Naive thymus-derived CD4-positive, alpha-beta T cell (primary cell): ENCODE measurements at regions of chrX and their contacts with region 1.

Region 1: DNA sequence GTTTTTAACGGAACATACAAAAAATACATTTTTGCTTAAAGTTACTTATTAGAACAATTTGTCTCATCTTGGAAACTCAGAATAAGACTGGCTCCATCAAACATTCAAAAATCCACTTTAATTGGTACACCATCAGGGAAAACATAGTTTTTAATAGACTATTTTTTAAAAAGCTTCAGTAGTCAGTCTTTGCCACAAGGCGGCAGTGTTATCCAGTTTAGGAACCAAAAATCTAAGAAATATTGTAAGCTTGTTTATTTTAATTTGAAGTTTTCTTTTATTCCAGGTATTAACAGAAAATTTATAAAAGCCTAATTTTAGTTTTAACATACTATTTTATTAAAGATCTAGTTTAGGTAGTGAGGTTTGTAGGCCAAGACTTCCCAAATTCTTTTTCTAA is 107.7 kb downstream of the APOOL start:
- DNase-seq: peak in 2 of 9 donors; percentile 9 to 10
- ATAC-seq: no peak
- H3K4me3 ChIP-seq: no peak overlapping the region
- H3K4me3 Mint-ChIP-seq: no peak overlapping the region
- H3K27ac ChIP-seq: no peak overlapping the region
- H3K27ac Mint-ChIP-seq: no peak overlapping the region
- H3K4me1 ChIP-seq: no peaks in the 10 kb centered on the region
- H3K4me1 Mint-ChIP-seq: no peaks in the 10 kb centered on the region
- H3K27me3 ChIP-seq: no peaks in the 10 kb centered on the region
- H3K27me3 Mint-ChIP-seq: no peaks in the 10 kb centered on the region

Region 2: DNA sequence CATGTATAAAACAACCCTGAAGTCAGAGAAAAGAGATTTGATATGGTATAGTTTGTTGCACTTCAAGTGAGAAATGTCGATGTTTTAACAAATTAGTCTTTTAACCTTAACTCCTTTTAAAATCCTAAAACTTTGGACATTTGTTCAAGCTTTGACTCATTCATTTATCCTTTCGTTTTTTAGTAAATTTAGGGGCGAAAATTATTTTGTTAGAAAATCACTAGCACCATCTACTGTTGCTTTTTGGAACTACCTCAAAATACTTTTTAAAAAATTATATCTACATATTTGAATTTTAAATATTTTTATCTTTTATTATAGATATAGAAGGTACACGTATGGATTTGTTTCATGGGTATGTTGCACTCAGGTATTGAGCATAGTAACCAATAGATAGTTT is 433.3 kb after region 1 on chrX:
- CTCF ChIA-PET with region 1: interaction called, 3 read pairs
- POLR2A ChIA-PET with region 1: no interaction called
- intact Hi-C with region 1: loop called in 1 of 2 experiments (anchors 1 kb)
- DNase-seq: no peak
- ATAC-seq: no peak
- H3K4me3 ChIP-seq: no peak overlapping the region
- H3K4me3 Mint-ChIP-seq: no peak overlapping the region
- H3K27ac ChIP-seq: no peak overlapping the region
- H3K27ac Mint-ChIP-seq: no peak overlapping the region
- H3K4me1 ChIP-seq: no peaks in the 10 kb centered on the region
- H3K4me1 Mint-ChIP-seq: no peaks in the 10 kb centered on the region
- H3K27me3 ChIP-seq: no peaks in the 10 kb centered on the region
- H3K27me3 Mint-ChIP-seq: no peaks in the 10 kb centered on the region

Region 3: DNA sequence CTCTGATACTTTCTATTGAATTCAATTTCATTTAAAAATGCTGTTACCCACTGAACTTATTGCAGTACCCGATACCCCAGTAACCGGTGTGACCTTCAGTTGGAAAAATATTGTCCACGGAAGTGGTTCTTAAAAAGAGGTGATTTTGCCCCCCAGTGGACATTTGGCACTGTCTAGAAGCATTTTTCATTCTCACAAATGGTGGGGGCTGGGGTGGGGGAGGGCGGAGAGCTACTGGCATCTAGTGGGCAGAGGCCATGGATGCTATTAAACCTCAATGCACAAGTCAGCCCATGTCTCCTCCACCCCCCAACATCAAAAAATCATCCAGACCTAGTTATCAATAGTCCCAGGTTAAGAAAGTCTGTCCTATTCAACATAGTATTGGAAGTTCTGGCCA is 955.6 kb after region 1 on chrX:
- CTCF ChIA-PET with region 1: no interaction called
- POLR2A ChIA-PET with region 1: no interaction called
- intact Hi-C with region 1: loop called in 1 of 2 experiments (anchors 5 kb)
- DNase-seq: no peak
- ATAC-seq: no peak
- H3K4me3 ChIP-seq: no peak overlapping the region
- H3K4me3 Mint-ChIP-seq: no peak overlapping the region
- H3K27ac ChIP-seq: no peak overlapping the region
- H3K27ac Mint-ChIP-seq: no peak overlapping the region
- H3K4me1 ChIP-seq: no peaks in the 10 kb centered on the region
- H3K4me1 Mint-ChIP-seq: no peaks in the 10 kb centered on the region
- H3K27me3 ChIP-seq: no peaks in the 10 kb centered on the region
- H3K27me3 Mint-ChIP-seq: peaks cover 0 to 9% (median 3%) of the 10 kb centered on the region in 5 donors

Region 4: DNA sequence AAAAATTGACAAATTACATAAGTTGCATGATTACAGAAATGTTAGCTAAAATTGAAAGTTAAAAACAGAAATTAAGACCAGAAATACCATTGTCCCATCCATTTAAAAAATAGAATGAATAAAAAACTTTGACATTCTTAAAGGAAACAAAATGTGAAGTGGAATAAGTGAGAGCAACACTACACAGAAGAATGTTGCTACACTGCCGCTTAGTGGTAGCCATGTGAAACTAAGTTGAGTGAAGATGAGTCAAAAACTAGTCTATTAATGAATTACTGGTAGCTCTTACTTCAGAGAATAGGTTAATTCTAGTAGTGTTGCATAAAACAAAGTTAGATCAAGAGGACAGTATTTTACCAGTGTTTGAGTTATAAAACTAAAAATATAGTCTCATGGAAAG is 1835.2 kb after region 1 on chrX:
- CTCF ChIA-PET with region 1: no interaction called
- POLR2A ChIA-PET with region 1: no interaction called
- intact Hi-C with region 1: loop called in 1 of 2 experiments (anchors 10 kb)
- DNase-seq: peak in 1 of 9 donors; percentile 1
- ATAC-seq: no peak
- H3K4me3 ChIP-seq: no peak overlapping the region
- H3K4me3 Mint-ChIP-seq: no peak overlapping the region
- H3K27ac ChIP-seq: no peak overlapping the region
- H3K27ac Mint-ChIP-seq: no peak overlapping the region
- H3K4me1 ChIP-seq: no peaks in the 10 kb centered on the region
- H3K4me1 Mint-ChIP-seq: no peaks in the 10 kb centered on the region
- H3K27me3 ChIP-seq: no peaks in the 10 kb centered on the region
- H3K27me3 Mint-ChIP-seq: no peaks in the 10 kb centered on the region